ENCODE measurements at regions of chr16 and their contacts with region 1.

Region 1: DNA sequence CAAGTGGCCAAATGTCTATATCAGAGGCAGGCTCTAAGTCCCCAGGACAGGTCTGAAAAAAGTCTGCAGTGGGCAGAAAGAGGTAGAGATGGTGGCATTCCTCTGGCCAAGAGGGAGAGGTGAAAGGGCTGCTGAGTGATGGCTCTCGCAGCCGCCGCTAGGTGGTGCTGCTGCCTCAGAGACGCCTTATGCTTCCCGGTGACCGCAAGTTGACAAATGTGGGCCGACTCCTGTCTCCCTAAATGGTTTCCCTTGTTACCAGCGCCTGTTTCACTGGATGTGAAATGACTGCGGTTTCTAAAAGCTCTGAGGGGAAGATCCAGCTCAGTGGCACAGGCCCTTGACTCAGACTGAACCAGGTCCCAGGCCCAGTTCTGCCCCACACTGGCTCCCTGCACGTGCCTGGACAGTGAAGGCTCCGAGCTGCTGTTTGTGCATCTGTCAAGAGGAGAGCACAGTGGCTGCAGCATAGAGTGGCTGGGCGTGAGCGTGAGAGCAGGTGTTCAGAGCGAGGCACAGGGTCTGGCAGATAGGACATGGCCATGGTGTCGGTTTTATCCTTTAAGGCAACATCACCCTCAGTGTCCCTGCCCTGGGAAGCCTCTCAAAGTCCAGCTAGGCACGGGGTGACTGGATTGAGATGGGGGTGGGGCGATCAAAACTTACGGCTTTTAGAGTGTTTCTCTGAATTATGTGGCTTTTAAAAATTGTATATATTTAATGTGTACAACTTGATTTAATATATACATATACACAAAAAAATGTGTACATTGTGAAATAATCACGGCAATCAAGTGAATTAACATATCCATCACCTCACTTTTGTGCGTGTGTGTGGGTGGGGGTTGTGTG is 19.9 kb downstream of the CLEC16A start:
- DNase-seq: peak; percentile 78
- ATAC-seq: peak; percentile 35
- H3K4me3 Mint-ChIP-seq: peak overlapping the region; percentile 66
- H3K27ac Mint-ChIP-seq: peak overlapping the region; percentile 94
- H3K4me1 Mint-ChIP-seq: peaks cover 52% of the 10 kb centered on the region
- H3K27me3 Mint-ChIP-seq: no peaks in the 10 kb centered on the region
- CTCF ChIP-seq: peak; percentile 93

Region 2: GRCh38 chr16:11076259-11077018 is 112.2 kb after region 1 on chr16:
- CTCF ChIA-PET with region 1: interaction called, 4 read pairs
- POLR2A ChIA-PET with region 1: interaction called, 11 read pairs
- intact Hi-C with region 1: no loop called
- DNase-seq: no peak
- ATAC-seq: peak; percentile 70
- H3K4me3 Mint-ChIP-seq: peak overlapping the region; percentile 51
- H3K27ac Mint-ChIP-seq: peak overlapping the region; percentile 95
- H3K4me1 Mint-ChIP-seq: peaks cover 83% of the 10 kb centered on the region
- H3K27me3 Mint-ChIP-seq: no peaks in the 10 kb centered on the region
- CTCF ChIP-seq: no peak

Region 3: GRCh38 chr16:11224096-11224893 is 260.0 kb after region 1 on chr16:
- CTCF ChIA-PET with region 1: no interaction called
- POLR2A ChIA-PET with region 1: interaction called, 23 read pairs
- intact Hi-C with region 1: no loop called
- DNase-seq: peak; percentile 34
- ATAC-seq: peak; percentile 31
- H3K4me3 Mint-ChIP-seq: peak overlapping the region; percentile 69
- H3K27ac Mint-ChIP-seq: peak overlapping the region; percentile 83
- H3K4me1 Mint-ChIP-seq: peaks cover 37% of the 10 kb centered on the region
- H3K27me3 Mint-ChIP-seq: no peaks in the 10 kb centered on the region
- CTCF ChIP-seq: no peak

Region 4: DNA sequence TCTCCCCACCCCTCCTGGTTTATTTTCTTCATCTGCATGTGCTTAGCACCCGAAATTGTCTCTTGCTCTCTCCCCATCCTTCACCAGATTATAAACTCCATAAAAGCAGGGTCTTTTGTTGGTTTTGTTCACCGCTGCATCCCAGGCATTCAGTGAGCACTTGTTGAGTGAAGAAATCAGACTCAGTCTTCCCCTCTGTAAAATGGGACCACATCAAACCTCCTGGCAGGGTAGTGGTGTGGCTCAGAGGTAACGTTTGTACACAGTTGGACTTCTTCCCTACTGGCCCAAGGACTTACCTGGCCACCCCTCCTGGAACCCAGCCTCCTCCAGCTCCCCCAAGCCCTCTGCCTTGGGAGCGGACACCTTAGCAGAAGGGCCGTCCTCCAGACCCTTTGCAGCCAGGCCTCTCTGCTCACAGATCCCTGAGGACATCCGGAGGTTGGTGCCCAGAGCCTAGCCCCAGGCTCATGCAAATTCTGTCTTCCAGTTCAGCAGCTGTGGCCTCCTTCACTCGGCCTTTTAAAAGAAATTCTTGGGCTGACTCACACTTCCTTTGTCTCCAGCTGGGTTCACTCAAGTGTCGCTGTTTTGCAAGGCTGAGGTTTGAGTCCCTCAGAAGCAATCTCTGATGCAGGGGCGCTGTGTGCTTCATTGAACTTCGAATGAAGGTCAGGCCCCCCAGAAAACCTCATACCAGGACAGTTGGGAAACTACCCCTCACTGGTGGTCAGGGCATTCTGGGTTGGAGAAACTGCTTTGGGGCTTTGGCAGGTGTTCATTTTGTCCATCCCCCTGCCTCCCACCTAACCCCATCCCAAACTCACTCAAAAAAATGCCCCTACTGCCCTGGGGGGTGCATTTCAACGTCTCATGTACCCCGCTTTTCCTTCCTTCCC is 364.2 kb after region 1 on chr16:
- CTCF ChIA-PET with region 1: no interaction called
- POLR2A ChIA-PET with region 1: interaction called, 19 read pairs
- intact Hi-C with region 1: loop called (anchors 1 kb)
- DNase-seq: peak; percentile 66
- ATAC-seq: peak; percentile 65
- H3K4me3 Mint-ChIP-seq: peak overlapping the region; percentile 80
- H3K27ac Mint-ChIP-seq: peak overlapping the region; percentile 94
- H3K4me1 Mint-ChIP-seq: peaks cover 72% of the 10 kb centered on the region
- H3K27me3 Mint-ChIP-seq: no peaks in the 10 kb centered on the region
- CTCF ChIP-seq: no peak

Region 5: DNA sequence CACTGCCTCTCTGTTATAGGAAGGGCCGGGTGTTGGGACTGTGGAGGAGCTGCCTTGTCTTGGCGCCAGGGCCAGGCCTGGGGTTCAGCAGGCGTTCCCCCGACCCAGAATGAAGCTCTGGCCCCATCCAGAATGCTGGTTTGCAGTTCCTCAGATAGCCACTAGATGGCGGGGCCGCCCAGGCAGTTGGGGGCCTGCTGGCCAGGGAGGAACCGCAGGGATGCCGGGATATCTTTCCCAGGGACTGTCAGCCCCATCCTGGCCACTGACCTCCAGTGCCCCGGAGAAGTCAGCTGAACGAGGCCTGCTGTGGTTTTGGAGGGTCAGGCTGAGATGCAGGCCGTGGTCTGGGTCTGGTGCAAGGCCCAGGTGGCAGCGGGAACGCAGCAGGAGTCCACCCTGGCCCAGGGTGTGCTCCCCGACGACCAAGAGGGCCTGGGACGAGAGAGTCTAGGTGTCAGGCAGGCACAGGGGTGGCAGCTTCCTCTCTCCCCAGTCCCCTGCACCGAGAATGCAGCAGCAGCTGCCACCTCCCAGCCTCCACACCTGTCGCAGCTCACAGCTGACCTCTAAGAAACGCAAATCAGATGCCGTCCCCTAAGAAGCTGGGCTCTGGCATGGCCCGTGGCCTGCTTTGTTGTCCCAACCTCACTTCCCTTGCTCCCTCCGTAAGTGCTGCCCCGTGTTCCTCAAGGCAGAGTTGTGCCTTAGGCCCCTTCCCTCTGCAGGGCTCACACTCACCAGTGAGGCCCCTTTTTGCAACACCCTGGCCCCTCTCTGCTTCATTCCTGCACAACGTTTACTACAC is 432.2 kb after region 1 on chr16:
- CTCF ChIA-PET with region 1: interaction called, 5 read pairs
- POLR2A ChIA-PET with region 1: interaction called, 3 read pairs
- intact Hi-C with region 1: loop called (anchors 2 kb)
- DNase-seq: peak; percentile 63
- ATAC-seq: peak; percentile 81
- H3K4me3 Mint-ChIP-seq: no peak overlapping the region
- H3K27ac Mint-ChIP-seq: no peak overlapping the region
- H3K4me1 Mint-ChIP-seq: peaks cover 4% of the 10 kb centered on the region
- H3K27me3 Mint-ChIP-seq: no peaks in the 10 kb centered on the region
- CTCF ChIP-seq: peak; percentile 90

Region 6: GRCh38 chr16:11586856-11587642 is 622.8 kb after region 1 on chr16 and contains the start of gene LITAF:
- CTCF ChIA-PET with region 1: no interaction called
- POLR2A ChIA-PET with region 1: no interaction called
- intact Hi-C with region 1: loop called (anchors 1 kb)
- DNase-seq: peak; percentile 71
- ATAC-seq: peak; percentile 60
- H3K4me3 Mint-ChIP-seq: peak within 1 kb of the TSS; percentile 91
- H3K27ac Mint-ChIP-seq: peak within 1 kb of the TSS; percentile 94
- H3K4me1 Mint-ChIP-seq: peaks cover 48% of the 10 kb centered on the region
- H3K27me3 Mint-ChIP-seq: no peaks in the 10 kb centered on the region
- CTCF ChIP-seq: no peak
- total RNA-seq, gene LITAF: 124 and 126 TPM in 2 replicates

Region 7: DNA sequence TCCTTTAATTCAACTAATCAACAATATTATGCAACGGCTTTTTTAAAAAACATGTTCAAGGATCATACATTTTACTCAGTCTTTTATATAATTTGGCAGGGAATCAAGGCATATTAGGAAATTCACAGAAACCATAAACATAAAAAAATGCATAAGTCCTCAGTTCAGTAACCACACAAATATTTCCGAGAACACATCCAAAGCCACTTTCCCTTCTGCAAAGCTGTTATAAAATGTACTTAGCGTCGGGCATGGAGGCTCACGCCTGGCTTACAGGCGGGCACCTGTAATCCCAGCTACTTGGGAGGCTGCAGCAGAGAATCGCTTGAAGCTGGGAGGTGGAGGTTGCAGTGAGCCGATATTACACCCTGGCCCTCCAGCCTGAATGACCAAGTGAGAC is 842.5 kb after region 1 on chr16:
- CTCF ChIA-PET with region 1: no interaction called
- POLR2A ChIA-PET with region 1: no interaction called
- intact Hi-C with region 1: loop called (anchors 1 kb)
- DNase-seq: no peak
- ATAC-seq: no peak
- H3K4me3 Mint-ChIP-seq: no peak overlapping the region
- H3K27ac Mint-ChIP-seq: no peak overlapping the region
- H3K4me1 Mint-ChIP-seq: peaks cover 16% of the 10 kb centered on the region
- H3K27me3 Mint-ChIP-seq: no peaks in the 10 kb centered on the region
- CTCF ChIP-seq: no peak

Measured in activated B cell treated with CpG ODN at 0.5 μM for 24 hours (primary cell).